ENCODE measurements at regions of chr2 and their contacts with region 1.

Region 1: DNA sequence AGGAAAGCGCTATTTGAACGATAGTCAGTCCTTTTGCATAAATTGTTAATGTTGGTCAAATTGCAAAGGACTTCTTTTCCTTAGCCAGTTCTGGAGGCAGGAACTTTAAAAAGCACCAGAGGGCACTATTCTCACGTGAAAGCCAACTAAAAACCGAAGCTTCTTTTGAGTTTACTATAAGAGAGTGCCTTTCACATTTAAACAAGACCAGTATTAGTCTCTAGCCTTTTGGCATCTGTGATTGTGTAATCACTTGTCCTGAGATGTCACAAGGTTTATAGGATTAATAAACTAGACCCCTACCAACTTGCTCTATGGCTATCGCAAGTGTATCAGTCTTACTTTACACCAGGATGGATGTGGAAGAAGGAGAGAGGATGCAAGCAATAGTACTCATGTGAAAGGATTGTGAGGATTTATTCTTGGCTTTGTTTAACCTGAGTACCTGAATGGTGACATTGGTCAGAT is 14.4 kb upstream of the STAT4 start:
- DNase-seq: peak; percentile 65

Region 2: GRCh38 chr2:190979906-190980629 is 185.1 kb before region 1 on chr2:
- in situ Hi-C with region 1: no loop called
- DNase-seq: no peak

Region 3: DNA sequence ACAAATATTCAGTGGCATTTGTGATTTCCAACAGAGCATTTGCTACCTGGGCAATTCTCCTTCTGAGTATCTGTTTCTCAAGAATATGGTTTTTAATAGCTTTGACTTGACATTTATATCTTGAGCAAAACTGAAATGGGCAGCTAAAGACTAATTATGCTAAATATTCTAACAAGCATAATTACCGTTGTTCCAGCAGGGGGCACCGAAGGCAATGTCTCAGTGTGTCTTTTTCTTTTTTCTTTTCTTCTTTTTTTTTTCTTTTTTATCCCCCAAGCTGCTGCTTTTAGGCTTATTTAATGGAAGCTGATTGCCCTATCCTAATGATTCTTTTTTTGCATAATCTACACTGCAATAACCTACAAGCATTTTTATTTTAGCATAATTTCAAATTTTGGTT is 373.9 kb after region 1 on chr2:
- in situ Hi-C with region 1: loop called (anchors 25 kb)
- DNase-seq: peak; percentile 57

Measured in SK-MEL-5 (cell line).